H1 (cell line): ENCODE measurements at regions of chr15 and their contacts with region 1.

Region 1: GRCh38 chr15:72285927-72286516 is 13.7 kb upstream of the PARP6 start:
- DNase-seq: peak; percentile 27 to 72
- H3K4me3 ChIP-seq: no peak overlapping the region
- H3K27ac ChIP-seq: no peak overlapping the region
- H3K4me1 ChIP-seq: no peaks in the 10 kb centered on the region
- H3K27me3 ChIP-seq: 0 out of 7 replicates have a peak, but pooled peaks cover 0 to 3% (median 0%) of the 10 kb centered on the region in 4 experiments
- CTCF ChIP-seq: peak; percentile 75 to 90 (median 82)
- EP300 ChIP-seq: no peak
- POLR2A ChIP-seq: no peak
- RAD21 ChIP-seq: peak; percentile 36 to 43; a peak in 3 of 4 replicates

Region 2: GRCh38 chr15:72272213-72273002 is 13.6 kb before region 1 on chr15 and contains the start of gene PARP6:
- CTCF ChIA-PET with region 1: interaction called, 50 read pairs
- POLR2A ChIA-PET with region 1: interaction called, 13 read pairs
- DNase-seq: peak; percentile 88 to 94
- H3K4me3 ChIP-seq: peak within 1 kb of the TSS; percentile 56 to 86 (median 76)
- H3K27ac ChIP-seq: no peak within 1 kb of the TSS
- H3K4me1 ChIP-seq: peaks cover 0 to 5% (median 3%) of the 10 kb centered on the region in 4 experiments; a peak in 4 of 7 replicates
- H3K27me3 ChIP-seq: no peaks in the 10 kb centered on the region; a peak in 1 of 7 replicates
- CTCF ChIP-seq: peak; percentile 69 to 79 (median 74)
- EP300 ChIP-seq: peak in 1 of 2 experiments; percentile 57; a peak in 1 of 3 replicates
- POLR2A ChIP-seq: peak; percentile 36 to 82
- RAD21 ChIP-seq: peak; percentile 4 to 6; a peak in 2 of 4 replicates
- total RNA-seq, gene PARP6: 33.0 and 39.8 TPM in 2 replicates

Region 3: GRCh38 chr15:72306211-72306785 is 20.3 kb after region 1 on chr15:
- CTCF ChIA-PET with region 1: interaction called, 19 read pairs
- POLR2A ChIA-PET with region 1: no interaction called
- DNase-seq: peak in 1 of 2 experiments; percentile 49
- H3K4me3 ChIP-seq: no peak overlapping the region
- H3K27ac ChIP-seq: no peak overlapping the region
- H3K4me1 ChIP-seq: no peaks in the 10 kb centered on the region
- H3K27me3 ChIP-seq: peaks cover 0 to 1% (median 0%) of the 10 kb centered on the region in 4 experiments; a peak in 3 of 7 replicates
- CTCF ChIP-seq: no peak
- EP300 ChIP-seq: no peak
- POLR2A ChIP-seq: no peak
- RAD21 ChIP-seq: no peak